ENCODE measurements at regions of chr1 and their contacts with region 1.

Region 1: DNA sequence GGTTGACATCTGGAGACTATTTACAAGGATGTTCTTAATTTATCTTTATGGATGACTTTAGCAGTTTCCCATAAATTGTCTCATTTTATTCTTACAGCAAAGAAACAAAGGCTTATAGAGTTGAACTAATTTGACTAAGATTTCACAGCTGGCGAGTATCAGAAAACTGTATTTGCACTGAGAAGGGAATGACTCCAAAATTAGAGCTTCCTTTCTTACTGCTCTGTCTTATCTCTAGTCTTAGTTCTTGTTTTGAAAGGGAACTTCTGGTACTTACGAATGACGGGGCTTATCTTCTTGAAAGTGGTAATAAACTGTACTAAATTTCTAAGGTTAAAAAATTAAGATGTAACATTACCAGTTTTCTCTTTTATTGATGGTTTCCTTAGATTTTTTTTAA is 13.6 kb downstream of the CNST start:
- DNase-seq: no peak
- ATAC-seq: peak; percentile 88
- H3K4me3 ChIP-seq: peak overlapping the region; percentile 56; the same call in 1 of the 2 replicates
- H3K27ac ChIP-seq: peak overlapping the region; percentile 72; the same call in 1 of the 2 replicates
- H3K4me1 ChIP-seq: peaks cover 24% of the 10 kb centered on the region
- H3K27me3 ChIP-seq: no peaks in the 10 kb centered on the region
- CTCF ChIP-seq: no peak
- EP300 ChIP-seq: no peak
- POLR2A ChIP-seq: no peak
- RAD21 ChIP-seq: no peak

Region 2: DNA sequence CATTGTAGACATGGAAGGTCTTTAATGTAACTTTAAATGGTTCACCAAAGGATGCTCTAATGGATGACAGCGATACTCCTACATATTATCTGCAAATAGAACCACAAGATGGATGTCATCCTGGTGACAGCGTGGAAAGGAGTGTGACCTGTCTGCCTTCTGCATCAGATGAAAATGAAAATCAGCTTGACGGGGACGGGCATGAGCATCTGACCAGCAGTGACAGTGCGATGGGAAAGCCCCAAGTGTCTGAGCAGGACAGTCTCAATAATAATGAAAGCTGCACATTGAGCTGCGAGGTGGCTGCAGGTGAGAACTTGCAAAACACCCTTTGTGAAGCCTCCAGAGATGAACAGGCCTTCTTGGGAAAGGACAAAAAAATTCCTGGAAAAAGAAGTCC is 11.7 kb after region 1 on chr1:
- CTCF ChIA-PET with region 1: interaction called, 11 read pairs
- POLR2A ChIA-PET with region 1: no interaction called
- RAD21 ChIA-PET with region 1: interaction called, 6 read pairs
- SMC1A ChIA-PET with region 1: interaction called, 14 read pairs
- in situ Hi-C with region 1: no loop called
- intact Hi-C with region 1: no loop called
- DNase-seq: peak; percentile 67
- ATAC-seq: peak; percentile 99
- H3K4me3 ChIP-seq: peak overlapping the region; percentile 29; the same call in 1 of the 2 replicates
- H3K27ac ChIP-seq: peak overlapping the region; percentile 64
- H3K4me1 ChIP-seq: peaks cover 12% of the 10 kb centered on the region; the same call in 1 of the 2 replicates
- H3K27me3 ChIP-seq: no peaks in the 10 kb centered on the region
- CTCF ChIP-seq: no peak
- EP300 ChIP-seq: no peak
- POLR2A ChIP-seq: peak; percentile 66
- RAD21 ChIP-seq: no peak

Region 3: DNA sequence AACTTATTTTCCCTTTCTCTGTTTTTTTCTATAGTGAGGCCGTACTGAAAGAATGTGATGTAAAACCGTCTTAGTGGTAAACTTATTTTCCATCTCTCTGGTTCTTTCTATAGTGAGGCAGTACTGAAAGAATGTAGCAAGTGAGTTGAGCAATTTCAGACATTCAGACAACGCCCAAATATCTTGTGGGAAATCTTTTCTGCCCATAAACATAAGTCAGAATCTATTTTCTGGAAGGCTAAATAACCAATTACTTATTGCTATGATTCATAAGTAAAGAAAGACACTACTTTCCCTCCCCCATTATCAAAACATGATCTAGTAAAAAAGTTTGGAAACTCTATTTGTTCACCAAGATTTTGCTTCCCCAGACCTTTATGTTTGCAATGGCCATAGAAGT is 125.5 kb after region 1 on chr1:
- CTCF ChIA-PET with region 1: no interaction called
- POLR2A ChIA-PET with region 1: no interaction called
- RAD21 ChIA-PET with region 1: no interaction called
- SMC1A ChIA-PET with region 1: no interaction called
- in situ Hi-C with region 1: no loop called
- intact Hi-C with region 1: no loop called
- DNase-seq: no peak
- ATAC-seq: no peak
- H3K4me3 ChIP-seq: no peak overlapping the region
- H3K27ac ChIP-seq: no peak overlapping the region
- H3K4me1 ChIP-seq: no peaks in the 10 kb centered on the region
- H3K27me3 ChIP-seq: no peaks in the 10 kb centered on the region
- CTCF ChIP-seq: no peak
- EP300 ChIP-seq: no peak
- POLR2A ChIP-seq: no peak
- RAD21 ChIP-seq: no peak

Region 4: GRCh38 chr1:246809473-246809872 is 229.7 kb after region 1 on chr1:
- CTCF ChIA-PET with region 1: no interaction called
- POLR2A ChIA-PET with region 1: no interaction called
- RAD21 ChIA-PET with region 1: no interaction called
- SMC1A ChIA-PET with region 1: no interaction called
- in situ Hi-C with region 1: no loop called
- intact Hi-C with region 1: no loop called
- DNase-seq: no peak
- ATAC-seq: peak; percentile 42; the same call in 1 of the 3 replicates
- H3K4me3 ChIP-seq: no peak overlapping the region
- H3K27ac ChIP-seq: no peak overlapping the region
- H3K4me1 ChIP-seq: no peaks in the 10 kb centered on the region
- H3K27me3 ChIP-seq: no peaks in the 10 kb centered on the region
- CTCF ChIP-seq: 0 out of 6 replicates have a peak, but pooled peaks of 2 of the 3 experiments have one; percentile 9 to 10
- EP300 ChIP-seq: no peak
- POLR2A ChIP-seq: no peak
- RAD21 ChIP-seq: no peak